IMR-90 (cell line): ENCODE measurements at regions of chr4 and their contacts with region 1.

Region 1: GRCh38 chr4:82989575-82990429 is 20.8 kb downstream of the LIN54 start:
- DNase-seq: peak; percentile 31
- ATAC-seq: peak; percentile 33
- H3K4me3 ChIP-seq: peak overlapping the region; percentile 2; the same call in 1 of the 2 replicates
- H3K27ac ChIP-seq: peak overlapping the region; percentile 62; the same call in 1 of the 2 replicates
- H3K4me1 ChIP-seq: peaks cover 11% of the 10 kb centered on the region
- H3K27me3 ChIP-seq: no peaks in the 10 kb centered on the region
- CTCF ChIP-seq: no peak
- POLR2A ChIP-seq: no peak
- RAD21 ChIP-seq: no peak

Region 2: GRCh38 chr4:82948647-82949204 is 41.1 kb before region 1 on chr4:
- CTCF ChIA-PET with region 1: no interaction called
- POLR2A ChIA-PET with region 1: no interaction called
- dilution Hi-C with region 1: no loop called
- in situ Hi-C with region 1: no loop called
- intact Hi-C with region 1: loop called (anchors 5 kb)
- DNase-seq: peak; percentile 52
- ATAC-seq: peak; percentile 57
- H3K4me3 ChIP-seq: no peak overlapping the region
- H3K27ac ChIP-seq: no peak overlapping the region
- H3K4me1 ChIP-seq: no peaks in the 10 kb centered on the region
- H3K27me3 ChIP-seq: no peaks in the 10 kb centered on the region
- CTCF ChIP-seq: no peak
- POLR2A ChIP-seq: no peak
- RAD21 ChIP-seq: no peak